Activated CD8-positive, alpha-beta T cell treated with anti-CD3 and anti-CD28 coated beads for 36 hours (primary cell): ENCODE measurements at regions of chr11 and their contacts with region 1.

Region 1: DNA sequence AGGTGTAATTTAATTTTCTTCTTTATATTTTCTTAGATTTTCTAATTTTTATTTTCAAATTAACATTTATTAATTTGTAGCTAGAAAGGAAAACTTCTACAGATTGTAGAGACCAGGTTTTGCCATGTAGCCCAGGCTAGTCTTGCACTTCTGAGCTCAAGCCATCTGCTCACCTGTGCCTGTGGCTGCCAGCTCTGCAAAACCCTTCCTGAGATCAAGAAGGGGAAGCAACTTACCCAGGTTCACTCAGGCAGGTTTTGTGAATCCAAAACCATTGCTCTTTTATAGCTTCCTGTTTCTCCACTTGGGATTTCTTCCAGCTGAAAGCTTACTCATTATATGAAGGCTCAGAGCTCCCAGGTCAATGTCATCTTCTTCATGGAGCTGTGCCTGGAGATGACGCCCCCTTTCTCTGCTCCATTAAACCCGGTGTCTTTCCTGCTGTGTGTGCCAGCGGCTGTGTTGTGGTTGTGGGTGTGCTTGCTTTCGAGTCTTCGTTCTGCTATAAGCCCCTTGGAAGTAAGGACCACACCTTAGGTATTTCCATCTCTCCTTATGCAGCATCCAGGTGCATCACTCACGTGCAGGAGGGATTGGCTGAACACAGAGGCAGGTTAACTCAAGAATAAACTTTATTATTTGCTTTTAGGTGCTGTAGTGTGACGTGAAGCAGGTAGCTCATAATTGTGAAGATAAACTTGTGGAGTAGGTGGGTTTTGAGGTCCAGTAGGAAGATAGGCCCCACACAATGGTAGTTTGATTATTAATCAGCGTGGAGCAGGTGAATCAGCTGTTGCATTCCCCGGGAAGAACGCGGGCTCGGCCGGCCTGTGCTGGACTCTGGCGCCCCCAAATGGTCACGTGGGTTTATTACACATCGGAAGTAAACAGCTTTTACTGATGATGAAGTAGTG is 42.2 kb upstream of the INCENP start:
- DNase-seq: peak; percentile 85
- ATAC-seq: peak; percentile 95
- H3K4me3 Mint-ChIP-seq: peak overlapping the region; percentile 32
- H3K27ac Mint-ChIP-seq: no peak overlapping the region
- H3K4me1 Mint-ChIP-seq: peaks cover 5% of the 10 kb centered on the region
- H3K27me3 Mint-ChIP-seq: no peaks in the 10 kb centered on the region
- CTCF ChIP-seq: peak; percentile 96

Region 2: DNA sequence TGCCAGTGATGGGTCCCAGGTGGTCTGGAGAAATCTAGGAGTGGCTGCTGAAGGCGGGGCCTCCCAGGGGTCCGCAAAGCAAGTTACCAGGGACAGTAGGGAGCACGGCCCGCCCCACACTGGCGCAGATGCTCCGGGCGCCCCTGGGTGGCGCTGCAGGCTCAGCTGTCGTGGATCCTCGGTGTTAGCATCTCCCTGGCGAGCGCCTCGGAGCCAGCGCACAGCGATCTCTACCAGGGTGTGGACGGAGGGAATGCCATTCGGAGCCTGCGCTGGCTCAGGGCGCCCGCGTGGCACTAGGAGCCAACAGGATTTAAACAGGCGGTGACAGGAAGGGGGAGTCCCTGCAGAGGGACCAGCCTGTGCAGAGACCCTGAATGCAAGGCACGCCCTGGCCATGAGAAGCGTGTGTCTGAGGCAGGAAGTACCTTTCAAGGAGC is 210.5 kb before region 1 on chr11:
- CTCF ChIA-PET with region 1: interaction called, 51 read pairs
- POLR2A ChIA-PET with region 1: interaction called, 5 read pairs
- intact Hi-C with region 1: no loop called
- DNase-seq: peak; percentile 80
- ATAC-seq: peak; percentile 97
- H3K4me3 Mint-ChIP-seq: peak overlapping the region; percentile 48
- H3K27ac Mint-ChIP-seq: no peak overlapping the region
- H3K4me1 Mint-ChIP-seq: peaks cover 2% of the 10 kb centered on the region
- H3K27me3 Mint-ChIP-seq: no peaks in the 10 kb centered on the region
- CTCF ChIP-seq: peak; percentile 95

Region 3: GRCh38 chr11:61899146-61899841 is 182.3 kb before region 1 on chr11:
- CTCF ChIA-PET with region 1: interaction called, 352 read pairs
- POLR2A ChIA-PET with region 1: no interaction called
- intact Hi-C with region 1: loop called (anchors 2 kb)
- DNase-seq: peak; percentile 95
- ATAC-seq: peak; percentile 95
- H3K4me3 Mint-ChIP-seq: no peak overlapping the region
- H3K27ac Mint-ChIP-seq: no peak overlapping the region
- H3K4me1 Mint-ChIP-seq: peaks cover 6% of the 10 kb centered on the region
- H3K27me3 Mint-ChIP-seq: no peaks in the 10 kb centered on the region
- CTCF ChIP-seq: peak; percentile 100

Region 4: GRCh38 chr11:61967116-61967923 is 114.3 kb before region 1 on chr11 and contains the start of gene FTH1:
- CTCF ChIA-PET with region 1: interaction called, 36 read pairs
- POLR2A ChIA-PET with region 1: interaction called, 3 read pairs
- intact Hi-C with region 1: loop called (anchors 10 kb)
- DNase-seq: peak; percentile 89
- ATAC-seq: peak; percentile 81
- H3K4me3 Mint-ChIP-seq: peak within 1 kb of the TSS; percentile 86
- H3K27ac Mint-ChIP-seq: peak within 1 kb of the TSS; percentile 94
- H3K4me1 Mint-ChIP-seq: peaks cover 61% of the 10 kb centered on the region
- H3K27me3 Mint-ChIP-seq: no peaks in the 10 kb centered on the region
- CTCF ChIP-seq: no peak
- total RNA-seq, gene FTH1: 700 to 729 TPM

Region 5: GRCh38 chr11:62025487-62026105 is 56.0 kb before region 1 on chr11:
- CTCF ChIA-PET with region 1: interaction called, 13 read pairs
- POLR2A ChIA-PET with region 1: no interaction called
- intact Hi-C with region 1: no loop called
- DNase-seq: peak; percentile 80
- ATAC-seq: peak; percentile 90
- H3K4me3 Mint-ChIP-seq: peak overlapping the region; percentile 62
- H3K27ac Mint-ChIP-seq: peak overlapping the region; percentile 95
- H3K4me1 Mint-ChIP-seq: peaks cover 14% of the 10 kb centered on the region
- H3K27me3 Mint-ChIP-seq: no peaks in the 10 kb centered on the region
- CTCF ChIP-seq: no peak

Region 6: GRCh38 chr11:62108017-62108750 is 26.5 kb after region 1 on chr11:
- CTCF ChIA-PET with region 1: interaction called, 152 read pairs
- POLR2A ChIA-PET with region 1: interaction called, 5 read pairs
- intact Hi-C with region 1: no loop called
- DNase-seq: peak; percentile 49
- ATAC-seq: peak; percentile 37
- H3K4me3 Mint-ChIP-seq: no peak overlapping the region
- H3K27ac Mint-ChIP-seq: no peak overlapping the region
- H3K4me1 Mint-ChIP-seq: peaks cover 16% of the 10 kb centered on the region
- H3K27me3 Mint-ChIP-seq: no peaks in the 10 kb centered on the region
- CTCF ChIP-seq: peak; percentile 78